AG04450 (cell line): ENCODE measurements at regions of chr7 and their contacts with region 1.

Region 1: GRCh38 chr7:44196450-44196872 is 4.3 kb upstream of the YKT6 start:
- DNase-seq: no peak
- H3K4me3 ChIP-seq: no peak overlapping the region
- H3K27ac ChIP-seq: no peak overlapping the region
- H3K27me3 ChIP-seq: peaks cover 14% of the 10 kb centered on the region
- CTCF ChIP-seq: peak; percentile 92

Region 2: DNA sequence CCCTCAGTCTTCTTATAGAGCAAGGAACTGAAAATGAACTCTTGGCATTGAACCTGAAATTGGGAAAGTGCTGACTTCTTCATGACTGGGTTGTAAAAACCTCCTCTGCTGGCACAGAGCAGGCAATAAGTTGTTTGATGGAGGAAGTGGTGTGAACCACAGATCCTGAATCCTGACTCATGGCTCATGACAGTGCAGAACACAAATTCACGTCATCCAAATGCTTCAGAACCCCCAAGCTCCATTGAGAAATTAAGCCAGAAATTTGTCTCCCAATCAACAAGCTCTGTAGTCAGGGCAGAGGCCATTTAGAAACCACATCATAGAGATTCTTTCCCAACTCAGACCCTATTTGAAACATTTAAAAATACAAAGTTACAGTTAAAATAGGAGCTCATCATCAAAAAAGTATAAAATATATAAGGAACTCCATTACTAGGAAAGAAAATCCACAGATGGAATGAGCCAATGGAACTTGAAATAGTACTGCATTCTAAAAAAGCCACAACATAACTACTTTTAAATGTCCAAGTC is 623.9 kb before region 1 on chr7:
- CTCF ChIA-PET with region 1: no interaction called
- POLR2A ChIA-PET with region 1: no interaction called
- DNase-seq: peak; percentile 98
- H3K4me3 ChIP-seq: no peak overlapping the region
- H3K27ac ChIP-seq: peak overlapping the region; percentile 85
- H3K27me3 ChIP-seq: no peaks in the 10 kb centered on the region
- CTCF ChIP-seq: no peak

Region 3: GRCh38 chr7:44072364-44073231 is 123.9 kb before region 1 on chr7:
- CTCF ChIA-PET with region 1: interaction called, 39 read pairs
- POLR2A ChIA-PET with region 1: interaction called, 3 read pairs
- DNase-seq: peak; percentile 61
- H3K4me3 ChIP-seq: no peak overlapping the region
- H3K27ac ChIP-seq: peak overlapping the region; percentile 31
- H3K27me3 ChIP-seq: no peaks in the 10 kb centered on the region
- CTCF ChIP-seq: peak; percentile 95

Region 4: GRCh38 chr7:44123190-44124003 is 73.1 kb before region 1 on chr7 and contains the start of gene POLD2:
- CTCF ChIA-PET with region 1: interaction called, 10 read pairs
- POLR2A ChIA-PET with region 1: interaction called, 3 read pairs
- DNase-seq: peak; percentile 85
- H3K4me3 ChIP-seq: peak within 1 kb of the TSS; percentile 77
- H3K27ac ChIP-seq: peak within 1 kb of the TSS; percentile 47
- H3K27me3 ChIP-seq: no peaks in the 10 kb centered on the region
- CTCF ChIP-seq: no peak
- polyA plus RNA-seq, gene POLD2: 64.8 and 79.6 TPM in 2 replicates

Region 5: DNA sequence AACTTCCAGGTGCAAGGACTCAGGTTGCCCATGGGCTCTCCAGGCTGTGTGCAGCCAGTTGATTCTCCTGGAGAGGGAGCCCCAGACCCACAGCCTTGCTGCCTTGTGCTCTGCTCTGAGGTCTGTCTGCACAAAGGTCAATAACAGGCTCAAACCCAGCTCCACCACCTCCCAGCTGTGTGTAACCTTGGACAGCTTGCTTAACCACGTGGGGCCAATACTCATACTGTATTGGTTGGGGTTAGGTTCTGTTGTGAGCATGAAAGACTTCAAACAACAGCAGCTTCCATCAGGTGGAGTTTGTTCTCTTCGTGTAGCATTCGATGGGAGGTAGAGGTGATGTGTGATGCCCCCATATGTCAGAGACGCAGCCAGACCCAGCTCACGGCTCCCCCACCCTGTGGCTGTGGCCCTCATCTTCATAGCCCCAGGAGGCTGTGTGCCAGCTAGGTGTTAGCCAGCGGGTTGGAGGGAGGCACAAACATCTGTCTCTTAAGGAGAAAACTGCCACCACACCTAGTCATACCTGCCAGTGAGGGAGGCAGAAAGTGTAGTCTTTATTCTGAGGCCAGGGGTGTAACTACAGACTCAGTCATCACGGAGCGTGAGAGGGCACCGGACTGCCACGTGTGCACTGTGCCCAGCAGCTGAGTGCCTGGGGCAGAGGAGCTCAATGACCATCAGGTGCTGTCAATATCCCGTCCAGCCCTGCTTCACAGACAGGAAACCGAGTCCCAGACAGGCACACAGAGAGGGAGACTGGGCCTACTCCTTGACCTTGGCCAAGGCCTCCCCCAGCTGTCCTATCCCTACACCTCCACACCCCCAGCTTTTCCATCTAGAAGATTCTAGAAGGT is 65.1 kb before region 1 on chr7:
- CTCF ChIA-PET with region 1: interaction called, 18 read pairs
- POLR2A ChIA-PET with region 1: no interaction called
- DNase-seq: no peak
- H3K4me3 ChIP-seq: no peak overlapping the region
- H3K27ac ChIP-seq: no peak overlapping the region
- H3K27me3 ChIP-seq: peaks cover 2% of the 10 kb centered on the region
- CTCF ChIP-seq: peak; percentile 44

Region 6: GRCh38 chr7:44147031-44147991 is 49.1 kb before region 1 on chr7:
- CTCF ChIA-PET with region 1: interaction called, 10 read pairs
- POLR2A ChIA-PET with region 1: interaction called, 3 read pairs
- DNase-seq: no peak
- H3K4me3 ChIP-seq: no peak overlapping the region
- H3K27ac ChIP-seq: no peak overlapping the region
- H3K27me3 ChIP-seq: peaks cover 29% of the 10 kb centered on the region
- CTCF ChIP-seq: no peak